ENCODE measurements at regions of chr16 and their contacts with region 1.

Region 1: DNA sequence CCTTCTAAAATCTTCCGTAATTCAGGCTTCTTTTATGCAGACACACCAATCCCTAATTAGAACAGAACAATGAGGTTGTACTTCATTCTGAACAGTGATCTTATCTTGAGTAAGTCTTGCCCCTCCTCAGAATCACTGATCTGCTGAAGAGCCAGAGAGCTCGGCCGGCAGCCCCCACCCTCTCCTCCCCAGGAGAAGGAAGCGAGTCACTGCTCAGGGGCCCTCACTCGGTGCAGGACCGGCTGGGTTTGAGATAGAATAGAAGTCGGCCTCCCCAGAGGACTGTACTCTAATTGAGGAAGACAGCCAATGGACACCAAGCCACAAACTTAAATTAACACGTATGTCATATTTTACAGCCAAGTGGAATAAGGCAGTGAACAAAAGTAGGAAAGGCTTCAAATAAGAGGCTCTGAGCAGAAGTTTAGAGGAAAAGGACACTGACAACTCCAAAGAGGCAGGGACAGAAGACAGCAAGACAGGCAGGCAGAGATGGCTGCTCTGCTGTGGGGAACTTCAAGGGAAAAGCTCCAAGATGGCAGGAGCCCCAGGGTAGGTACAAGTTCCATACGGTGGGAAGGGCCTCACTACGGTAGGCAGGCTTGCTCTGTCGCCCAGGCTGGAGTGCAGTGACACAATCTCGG is 18.6 kb downstream of the CREBBP start:
- DNase-seq: no peak
- H3K4me3 ChIP-seq: no peak overlapping the region
- H3K27ac ChIP-seq: peak overlapping the region in 1 of 2 donors; percentile 9
- H3K4me1 ChIP-seq: peaks cover 18 to 48% of the 10 kb centered on the region in 2 donors
- H3K27me3 ChIP-seq: no peaks in the 10 kb centered on the region
- CTCF ChIP-seq: no peak
- POLR2A ChIP-seq: no peak

Region 2: DNA sequence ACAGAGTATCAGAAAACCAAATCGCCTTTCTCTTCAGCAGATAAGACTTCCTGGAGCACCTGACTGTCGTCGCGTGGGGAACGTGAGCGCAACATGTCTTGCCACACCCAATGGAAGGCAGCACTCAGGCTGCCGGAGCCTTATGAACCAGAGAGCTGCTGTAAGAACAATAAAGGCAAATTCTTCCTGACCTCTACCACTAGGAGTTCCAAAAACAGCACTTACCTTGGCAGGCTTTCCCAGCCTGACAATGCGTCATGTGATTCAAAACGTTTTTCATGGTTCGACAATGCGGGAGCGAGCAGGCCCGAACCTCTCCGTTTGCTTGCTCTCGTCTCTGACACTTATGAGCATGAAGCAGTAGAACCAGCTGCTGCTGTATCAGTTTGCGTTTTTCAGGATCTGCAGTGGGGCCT is 68.8 kb before region 1 on chr16:
- intact Hi-C with region 1: loop called (anchors 10 kb)
- DNase-seq: peak in 1 of 2 donors; percentile 51
- H3K4me3 ChIP-seq: no peak overlapping the region
- H3K27ac ChIP-seq: no peak overlapping the region
- H3K4me1 ChIP-seq: no peaks in the 10 kb centered on the region
- H3K27me3 ChIP-seq: no peaks in the 10 kb centered on the region
- CTCF ChIP-seq: peak in 2 of 4 experiments; percentile 4 to 5
- POLR2A ChIP-seq: no peak

Region 3: DNA sequence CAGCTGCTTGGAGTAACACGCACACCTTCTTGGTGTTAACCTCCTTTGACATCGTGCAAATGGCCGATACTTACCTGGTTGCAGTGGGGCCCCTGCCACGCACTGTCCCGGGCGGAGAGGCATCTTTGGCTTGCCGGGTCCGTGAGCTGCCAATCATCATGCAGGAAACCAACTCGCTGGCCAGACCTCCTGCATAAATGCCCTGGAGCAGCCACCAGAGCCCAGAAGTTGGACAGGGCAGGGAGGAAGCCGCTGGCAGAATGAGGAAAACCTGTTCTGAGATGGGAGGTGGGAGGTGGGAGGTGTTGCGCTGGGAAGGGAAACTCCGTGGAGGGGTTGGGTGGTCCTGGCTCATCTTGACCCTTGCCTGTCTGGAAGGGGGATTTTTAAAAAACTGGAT is 60.3 kb after region 1 on chr16:
- intact Hi-C with region 1: no loop called
- DNase-seq: no peak
- H3K4me3 ChIP-seq: no peak overlapping the region
- H3K27ac ChIP-seq: no peak overlapping the region
- H3K4me1 ChIP-seq: no peaks in the 10 kb centered on the region
- H3K27me3 ChIP-seq: no peaks in the 10 kb centered on the region
- CTCF ChIP-seq: no peak
- POLR2A ChIP-seq: no peak

Measured in uterus (tissue), 4 donors.